Heart right ventricle (tissue), 16 donors: ENCODE measurements at regions of chr14 and their contacts with region 1.

Region 1: DNA sequence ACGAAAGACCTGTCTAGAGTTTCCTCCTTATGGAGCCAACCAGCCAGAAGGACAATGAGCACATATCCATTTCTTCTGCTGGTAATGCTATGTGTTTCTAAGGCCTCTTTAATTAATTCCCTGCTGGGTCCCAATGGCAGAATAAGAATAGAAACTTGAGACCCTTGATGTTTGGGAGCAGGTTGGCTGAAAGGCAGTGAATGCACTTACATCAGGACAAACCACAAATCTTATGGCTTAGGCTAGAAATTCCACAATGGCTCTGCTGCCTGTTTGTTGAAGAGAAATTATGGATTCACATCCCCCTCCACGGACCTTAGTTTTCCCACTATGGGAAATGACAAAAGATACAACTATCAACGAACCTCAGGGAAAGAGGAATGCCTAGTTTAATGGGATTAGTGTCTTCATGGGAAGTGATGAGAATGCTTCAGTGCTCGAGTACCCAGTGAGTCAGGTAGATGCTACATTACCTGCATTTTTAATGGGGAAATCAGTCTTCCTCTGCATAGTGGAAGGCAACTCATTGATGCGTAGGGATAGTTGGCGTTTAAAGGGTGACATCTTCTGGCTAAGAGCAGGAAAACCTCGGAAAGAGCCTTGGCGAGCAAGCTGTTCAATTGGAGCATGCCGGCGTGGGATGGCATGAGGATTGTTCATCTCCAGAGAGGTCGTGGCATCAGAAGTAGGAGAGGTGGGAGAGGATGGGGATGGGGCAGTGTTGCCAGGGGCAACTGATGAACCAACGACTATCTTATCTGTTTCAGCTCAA is 46.5 kb downstream of the PAPLN start:
- DNase-seq: no peak
- ATAC-seq: no peak
- H3K4me3 ChIP-seq: no peak overlapping the region
- H3K27ac ChIP-seq: no peak overlapping the region
- H3K4me1 ChIP-seq: no peaks in the 10 kb centered on the region
- H3K27me3 ChIP-seq: no peaks in the 10 kb centered on the region
- CTCF ChIP-seq: peak in 3 of 9 donors; percentile 10 to 31 (median 26)

Region 2: DNA sequence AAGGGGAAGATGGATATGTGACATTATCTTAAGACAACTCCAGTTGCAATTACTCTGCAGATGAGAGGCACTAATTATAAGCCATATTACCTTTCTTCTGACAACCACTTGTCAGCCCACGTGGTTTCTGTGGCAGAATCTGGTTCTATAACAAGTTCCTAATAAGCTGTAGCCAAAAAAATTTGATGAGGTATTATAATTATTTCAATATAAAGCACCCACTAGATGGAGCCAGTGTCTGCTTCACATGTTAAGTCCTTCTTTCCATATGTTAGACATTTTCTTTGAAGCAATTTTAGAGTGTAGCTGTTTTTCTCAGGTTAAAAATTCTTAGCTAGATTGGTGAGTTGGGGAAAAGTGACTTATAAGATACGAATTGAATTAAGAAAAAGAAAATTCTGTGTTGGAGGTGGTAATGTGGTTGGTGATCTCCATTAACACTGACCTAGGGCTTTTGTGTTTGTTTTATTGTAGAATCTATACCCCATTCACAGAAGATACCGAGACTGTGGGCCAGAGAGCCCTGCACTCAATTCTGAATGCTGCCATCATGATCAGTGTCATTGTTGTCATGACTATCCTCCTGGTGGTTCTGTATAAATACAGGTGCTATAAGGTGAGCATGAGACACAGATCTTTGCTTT is 110.6 kb before region 1 on chr14:
- intact Hi-C with region 1: loop called in 2 of 10 experiments (anchors 5 to 10 kb)
- DNase-seq: no peak
- ATAC-seq: no peak
- H3K4me3 ChIP-seq: no peak overlapping the region
- H3K27ac ChIP-seq: no peak overlapping the region
- H3K4me1 ChIP-seq: peaks cover 0 to 18% (median 0%) of the 10 kb centered on the region in 9 donors
- H3K27me3 ChIP-seq: no peaks in the 10 kb centered on the region
- CTCF ChIP-seq: peak; percentile 16 to 62 (median 55)

Region 3: GRCh38 chr14:73311708-73312030 is 27.9 kb after region 1 on chr14:
- intact Hi-C with region 1: loop called in 1 of 10 experiments (anchors 1 kb)
- DNase-seq: no peak
- ATAC-seq: no peak
- H3K4me3 ChIP-seq: no peak overlapping the region
- H3K27ac ChIP-seq: peak overlapping the region in 2 of 10 donors; percentile 51 to 68
- H3K4me1 ChIP-seq: peaks cover 0 to 18% (median 8%) of the 10 kb centered on the region in 9 donors
- H3K27me3 ChIP-seq: no peaks in the 10 kb centered on the region
- CTCF ChIP-seq: no peak

Region 4: DNA sequence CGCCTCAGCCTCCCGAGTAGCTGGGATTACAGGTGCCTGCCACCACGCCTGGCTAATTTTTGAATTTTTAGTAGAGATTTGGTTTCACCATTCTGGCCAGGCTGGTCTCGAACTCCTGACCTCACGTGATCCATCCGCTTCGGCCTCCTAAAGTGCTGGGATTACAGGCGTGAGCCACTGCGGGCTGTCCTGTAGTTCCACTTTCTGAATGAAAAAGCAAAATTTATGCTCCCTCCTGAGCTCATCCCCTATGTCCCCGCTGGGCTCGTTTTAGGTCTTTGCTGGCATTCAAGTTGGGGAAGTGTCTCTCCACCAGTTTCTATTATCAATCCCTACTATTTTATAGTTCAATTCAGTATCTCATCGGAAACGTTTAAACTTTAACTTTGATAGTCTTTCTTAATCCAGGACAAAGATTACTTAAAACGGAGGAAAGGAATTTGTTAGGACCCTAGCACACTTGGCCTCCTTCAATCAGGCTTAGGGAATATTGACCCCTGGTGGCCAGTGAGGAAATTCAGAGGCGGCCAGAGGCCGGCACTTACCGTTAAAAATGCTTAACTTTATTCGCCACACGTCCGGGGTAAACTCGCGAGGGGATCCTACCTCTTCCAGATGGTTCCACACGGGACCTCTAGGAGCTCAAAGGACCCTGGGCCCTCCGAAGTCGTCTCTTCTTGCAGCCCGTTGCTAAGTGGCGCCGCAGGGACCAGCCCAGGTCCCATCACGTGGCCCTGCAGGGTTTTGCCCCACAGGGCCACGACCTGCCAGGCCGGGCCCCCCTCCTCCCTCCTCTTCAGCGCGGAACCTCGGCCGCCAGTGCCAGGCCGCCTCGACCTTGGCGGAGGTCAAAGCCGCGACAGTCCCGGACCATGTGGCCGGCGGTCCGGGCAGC is 349.6 kb after region 1 on chr14:
- intact Hi-C with region 1: loop called in 1 of 10 experiments (anchors 10 kb)
- DNase-seq: peak; percentile 59 to 65
- ATAC-seq: peak; percentile 86 to 92 (median 90)
- H3K4me3 ChIP-seq: peak overlapping the region; percentile 41 to 70 (median 62)
- H3K27ac ChIP-seq: peak overlapping the region in 9 of 10 donors; percentile 2 to 75 (median 64)
- H3K4me1 ChIP-seq: peaks cover 0 to 17% (median 13%) of the 10 kb centered on the region in 9 donors
- H3K27me3 ChIP-seq: peaks cover 0 to 15% (median 0%) of the 10 kb centered on the region in 7 donors
- CTCF ChIP-seq: peak; percentile 83 to 93 (median 87)

Region 5: GRCh38 chr14:73795972-73796371 is 512.2 kb after region 1 on chr14:
- intact Hi-C with region 1: no loop called
- DNase-seq: no peak
- ATAC-seq: no peak
- H3K4me3 ChIP-seq: no peak overlapping the region
- H3K27ac ChIP-seq: no peak overlapping the region
- H3K4me1 ChIP-seq: peaks cover 1 to 25% (median 11%) of the 10 kb centered on the region in 9 donors
- H3K27me3 ChIP-seq: no peaks in the 10 kb centered on the region
- CTCF ChIP-seq: no peak